Body of pancreas (tissue), 4 donors: ENCODE measurements at regions of chr2 and their contacts with region 1.

Region 1: DNA sequence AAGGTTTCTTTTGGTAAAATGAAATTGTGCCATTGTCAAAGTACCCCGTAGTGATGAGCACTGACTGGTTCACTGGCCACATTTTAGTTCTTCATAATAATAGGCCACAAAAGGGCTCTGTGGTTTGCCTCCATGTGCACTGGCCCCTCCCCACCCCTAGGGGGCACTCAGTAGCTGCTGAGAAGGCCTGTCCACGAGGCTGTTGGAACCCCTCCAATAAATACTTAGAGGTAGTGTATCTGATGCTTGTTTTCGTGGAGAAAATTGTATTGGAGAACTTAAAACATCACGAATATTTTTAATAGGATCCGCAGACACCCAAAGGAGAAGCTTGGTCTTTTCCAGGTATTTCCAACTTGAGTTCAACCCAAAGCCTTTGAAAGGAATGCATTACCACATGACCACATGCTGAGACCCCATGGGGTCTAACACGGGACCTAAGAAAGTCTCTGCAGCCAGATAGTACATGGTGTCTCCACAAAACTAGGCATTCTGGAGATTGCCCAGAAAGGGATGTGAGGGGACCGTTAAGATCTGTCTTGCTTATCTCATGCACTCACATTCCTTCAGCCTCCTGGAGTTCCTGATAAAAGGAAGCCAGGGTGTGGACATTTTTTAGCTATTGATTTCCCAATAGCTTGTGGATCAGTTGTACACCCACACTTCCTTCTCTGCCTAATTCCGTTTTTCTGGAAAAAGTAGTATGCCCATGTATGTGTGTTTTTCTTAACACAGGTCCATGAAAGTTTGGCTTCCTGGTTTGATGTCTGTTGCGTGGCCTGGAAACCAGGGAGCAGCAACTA is 28.5 kb upstream of the NOSTRIN start:
- DNase-seq: peak; percentile 80 to 83 (median 82)
- ATAC-seq: peak; percentile 93
- H3K4me3 ChIP-seq: no peak overlapping the region
- H3K27ac ChIP-seq: peak overlapping the region; percentile 0 to 53 (median 30)
- H3K4me1 ChIP-seq: peaks cover 26% of the 10 kb centered on the region
- H3K27me3 ChIP-seq: no peaks in the 10 kb centered on the region
- CTCF ChIP-seq: peak; percentile 88 to 96 (median 92)
- POLR2A ChIP-seq: no peak

Region 2: GRCh38 chr2:168671932-168672331 is 102.0 kb before region 1 on chr2:
- intact Hi-C with region 1: no loop called
- DNase-seq: no peak
- ATAC-seq: no peak
- H3K4me3 ChIP-seq: no peak overlapping the region
- H3K27ac ChIP-seq: no peak overlapping the region
- H3K4me1 ChIP-seq: no peaks in the 10 kb centered on the region
- H3K27me3 ChIP-seq: no peaks in the 10 kb centered on the region
- CTCF ChIP-seq: no peak
- POLR2A ChIP-seq: no peak

Region 3: DNA sequence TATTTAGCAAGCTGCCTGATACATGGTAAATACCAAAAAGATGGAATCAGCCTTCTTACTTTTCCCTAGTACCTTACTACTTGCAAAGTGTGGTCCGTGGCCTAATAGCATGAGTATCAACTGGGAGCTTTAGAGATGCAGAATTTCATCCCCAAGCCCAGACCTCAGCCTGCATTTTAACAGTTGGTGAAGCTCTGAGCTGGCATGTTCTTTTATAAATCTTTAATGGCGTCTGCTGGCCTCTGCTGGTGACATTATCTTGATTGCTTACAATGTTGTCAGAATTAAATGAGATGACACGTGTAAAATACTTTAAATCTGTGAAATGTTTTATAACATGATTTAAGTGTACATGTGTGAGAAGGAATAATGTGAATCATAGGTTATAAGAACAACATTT is 86.6 kb before region 1 on chr2:
- intact Hi-C with region 1: no loop called
- DNase-seq: peak in 2 of 4 donors; percentile 8 to 14
- ATAC-seq: no peak
- H3K4me3 ChIP-seq: no peak overlapping the region
- H3K27ac ChIP-seq: no peak overlapping the region
- H3K4me1 ChIP-seq: no peaks in the 10 kb centered on the region
- H3K27me3 ChIP-seq: no peaks in the 10 kb centered on the region
- CTCF ChIP-seq: peak in 3 of 7 experiments; percentile 17 to 21 (median 20)
- POLR2A ChIP-seq: no peak

Region 4: GRCh38 chr2:168912901-168913369 is 139.0 kb after region 1 on chr2:
- intact Hi-C with region 1: loop called (anchors 10 kb)
- DNase-seq: peak; percentile 27 to 68 (median 36)
- ATAC-seq: peak; percentile 77
- H3K4me3 ChIP-seq: no peak overlapping the region
- H3K27ac ChIP-seq: no peak overlapping the region
- H3K4me1 ChIP-seq: peaks cover 8% of the 10 kb centered on the region
- H3K27me3 ChIP-seq: no peaks in the 10 kb centered on the region
- CTCF ChIP-seq: no peak
- POLR2A ChIP-seq: no peak